Brain microvascular endothelial cell (primary cell): ENCODE measurements at regions of chr5 and their contacts with region 1.

Region 1: GRCh38 chr5:141412854-141413539 is at the start of gene PCDHGA10:
- DNase-seq: peak; percentile 66
- H3K4me3 ChIP-seq: peak within 1 kb of the TSS; percentile 55
- H3K27ac ChIP-seq: no peak within 1 kb of the TSS
- H3K27me3 ChIP-seq: no peaks in the 10 kb centered on the region
- CTCF ChIP-seq: peak; percentile 79

Region 2: GRCh38 chr5:141524604-141525597 is 111.9 kb after region 1 on chr5:
- in situ Hi-C with region 1: loop called (anchors 25 kb)
- DNase-seq: peak; percentile 98
- H3K4me3 ChIP-seq: no peak overlapping the region
- H3K27ac ChIP-seq: peak overlapping the region; percentile 51
- H3K27me3 ChIP-seq: no peaks in the 10 kb centered on the region
- CTCF ChIP-seq: peak; percentile 100